BJ (cell line): ENCODE measurements at regions of chr2 and their contacts with region 1.

Region 1: GRCh38 chr2:240434728-240435456 is 571 bp upstream of the GPC1 start:
- DNase-seq: peak; percentile 26
- H3K4me3 ChIP-seq: peak overlapping the region; percentile 70
- H3K27me3 ChIP-seq: no peaks in the 10 kb centered on the region
- CTCF ChIP-seq: no peak

Region 2: DNA sequence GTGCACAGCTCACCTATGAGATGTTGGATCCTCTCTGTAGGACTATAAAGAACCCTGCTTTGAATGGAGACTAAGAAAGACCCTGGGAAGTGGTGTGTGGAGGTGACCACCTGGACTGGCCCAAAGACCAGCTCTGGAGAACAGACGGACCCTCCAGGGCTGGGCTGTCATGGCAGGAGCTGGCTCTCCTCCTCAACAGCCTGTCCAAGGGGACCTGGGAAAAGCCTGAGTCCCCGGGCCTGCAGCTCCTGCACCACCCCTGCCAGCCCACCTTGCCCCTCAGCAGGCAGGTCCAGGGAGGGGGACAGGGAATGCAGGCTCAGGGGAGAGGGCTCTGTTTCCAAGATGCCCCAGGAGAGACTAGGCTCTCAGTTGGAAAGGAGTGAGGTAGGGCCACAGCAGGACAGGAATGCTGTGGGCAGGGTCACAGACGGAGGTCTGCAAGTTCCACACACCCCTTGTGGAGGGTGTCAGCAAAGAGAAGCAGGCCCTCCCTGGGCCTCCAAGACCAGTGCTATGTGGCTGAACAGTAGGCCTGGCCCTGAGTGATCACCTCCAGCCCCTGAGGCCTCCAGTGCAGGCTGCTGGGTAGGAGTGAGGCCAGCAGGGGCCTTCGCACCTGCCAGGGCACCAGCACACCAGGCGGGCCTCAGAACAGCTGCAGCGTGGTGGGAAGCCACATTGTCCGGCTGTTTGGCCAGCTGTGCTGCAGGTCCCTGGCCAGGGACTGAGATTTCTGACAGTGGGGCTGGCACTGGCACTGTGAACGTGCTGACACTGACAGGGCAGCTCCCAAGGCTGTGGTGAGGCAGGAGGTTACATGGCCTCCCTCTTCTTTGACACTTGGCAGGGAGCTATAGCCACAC is 208.0 kb before region 1 on chr2:
- CTCF ChIA-PET with region 1: interaction called, 50 read pairs
- POLR2A ChIA-PET with region 1: interaction called, 4 read pairs
- DNase-seq: no peak
- H3K4me3 ChIP-seq: no peak overlapping the region
- H3K27me3 ChIP-seq: peaks cover 1% of the 10 kb centered on the region
- CTCF ChIP-seq: no peak

Region 3: GRCh38 chr2:240300261-240300821 is 134.6 kb before region 1 on chr2:
- CTCF ChIA-PET with region 1: interaction called, 11 read pairs
- POLR2A ChIA-PET with region 1: no interaction called
- DNase-seq: no peak
- H3K4me3 ChIP-seq: no peak overlapping the region
- H3K27me3 ChIP-seq: peaks cover 2% of the 10 kb centered on the region
- CTCF ChIP-seq: no peak

Region 4: GRCh38 chr2:240369801-240370585 is 64.9 kb before region 1 on chr2:
- CTCF ChIA-PET with region 1: interaction called, 7 read pairs
- POLR2A ChIA-PET with region 1: interaction called, 12 read pairs
- DNase-seq: peak; percentile 84
- H3K4me3 ChIP-seq: no peak overlapping the region
- H3K27me3 ChIP-seq: no peaks in the 10 kb centered on the region
- CTCF ChIP-seq: 0 out of 2 replicates have a peak, but pooled peaks have one; percentile 9

Region 5: GRCh38 chr2:240419723-240420552 is 15.0 kb before region 1 on chr2:
- CTCF ChIA-PET with region 1: no interaction called
- POLR2A ChIA-PET with region 1: no interaction called
- DNase-seq: no peak
- H3K4me3 ChIP-seq: no peak overlapping the region
- H3K27me3 ChIP-seq: no peaks in the 10 kb centered on the region
- CTCF ChIP-seq: no peak

Region 6: GRCh38 chr2:240529344-240529999 is 94.6 kb after region 1 on chr2:
- CTCF ChIA-PET with region 1: no interaction called
- POLR2A ChIA-PET with region 1: no interaction called
- DNase-seq: no peak
- H3K4me3 ChIP-seq: no peak overlapping the region
- H3K27me3 ChIP-seq: no peaks in the 10 kb centered on the region
- CTCF ChIP-seq: no peak

Region 7: DNA sequence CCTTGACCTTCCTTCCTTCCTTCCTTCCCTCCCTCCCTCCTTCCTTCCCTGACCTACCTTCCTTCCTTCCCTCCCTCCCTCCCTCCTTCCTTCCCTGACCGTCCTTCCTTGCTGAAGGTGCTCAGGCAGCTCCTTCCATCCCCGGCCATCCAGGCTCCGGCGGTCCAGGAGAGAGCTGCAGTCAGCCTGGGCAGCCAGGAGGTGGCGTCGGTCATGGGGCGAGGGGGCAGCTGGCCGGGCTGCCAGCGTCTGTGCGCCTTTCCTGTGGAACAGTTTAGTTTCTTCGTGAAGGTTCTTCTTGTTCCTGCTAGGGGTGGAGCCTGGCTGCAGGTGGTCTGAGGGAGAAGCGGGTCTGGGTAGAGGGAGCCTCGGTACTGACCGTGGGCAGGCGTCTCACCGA is 206.0 kb after region 1 on chr2:
- CTCF ChIA-PET with region 1: no interaction called
- POLR2A ChIA-PET with region 1: no interaction called
- DNase-seq: no peak
- H3K4me3 ChIP-seq: no peak overlapping the region
- H3K27me3 ChIP-seq: peaks cover 6% of the 10 kb centered on the region
- CTCF ChIP-seq: peak; percentile 52